Adrenal gland (tissue), 19 donors: ENCODE measurements at regions of chr1 and their contacts with region 1.

Region 1: DNA sequence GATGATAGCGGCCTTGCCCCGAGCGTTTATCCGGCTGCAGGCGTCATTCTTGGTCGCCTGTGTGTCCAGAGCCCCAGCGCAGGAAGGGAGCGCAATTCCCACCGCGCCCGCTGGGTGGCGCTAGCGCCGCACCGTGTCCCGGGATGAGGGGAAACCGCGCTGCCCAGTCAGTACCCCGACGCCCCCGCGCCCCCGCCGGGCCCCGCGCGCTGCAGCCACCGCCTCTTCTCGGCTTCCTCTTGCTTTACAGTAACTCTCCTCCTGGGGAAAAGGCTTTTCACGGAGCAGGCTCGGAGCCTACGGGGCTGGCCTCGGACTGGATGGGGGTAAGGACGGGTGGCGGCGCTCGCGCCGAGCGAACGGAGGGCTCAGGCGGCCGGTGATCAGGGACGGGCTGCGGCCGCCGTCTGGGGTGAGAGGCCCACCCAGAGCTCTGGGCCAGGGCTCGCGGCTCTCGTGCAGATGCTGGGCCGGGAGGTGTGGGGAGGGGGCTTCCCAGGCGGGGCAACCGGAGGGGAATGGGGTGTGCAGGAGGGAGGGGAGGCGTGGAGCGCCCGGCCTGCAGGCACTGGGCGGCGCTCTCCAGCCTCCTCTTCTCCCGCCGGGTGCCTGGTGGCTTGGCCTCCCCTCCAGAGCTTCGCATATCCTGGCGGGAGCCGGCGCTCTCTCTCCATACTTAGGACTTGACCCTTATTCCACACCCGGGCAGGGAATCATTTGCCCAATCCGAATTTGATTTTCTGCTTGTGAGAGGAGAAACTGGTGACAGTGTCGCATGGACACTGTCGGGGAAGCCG is 29.8 kb downstream of the TEX35 start:
- DNase-seq: peak; percentile 83 to 95 (median 89)
- H3K4me3 ChIP-seq: peak overlapping the region; percentile 26 to 94 (median 74)
- H3K27ac ChIP-seq: peak overlapping the region in 4 of 5 donors; percentile 45 to 86 (median 81)
- H3K4me1 ChIP-seq: peaks cover 4 to 6% of the 10 kb centered on the region in 2 donors
- H3K27me3 ChIP-seq: no peaks in the 10 kb centered on the region
- CTCF ChIP-seq: peak; percentile 93 to 99 (median 98)
- POLR2A ChIP-seq: no peak

Region 2: DNA sequence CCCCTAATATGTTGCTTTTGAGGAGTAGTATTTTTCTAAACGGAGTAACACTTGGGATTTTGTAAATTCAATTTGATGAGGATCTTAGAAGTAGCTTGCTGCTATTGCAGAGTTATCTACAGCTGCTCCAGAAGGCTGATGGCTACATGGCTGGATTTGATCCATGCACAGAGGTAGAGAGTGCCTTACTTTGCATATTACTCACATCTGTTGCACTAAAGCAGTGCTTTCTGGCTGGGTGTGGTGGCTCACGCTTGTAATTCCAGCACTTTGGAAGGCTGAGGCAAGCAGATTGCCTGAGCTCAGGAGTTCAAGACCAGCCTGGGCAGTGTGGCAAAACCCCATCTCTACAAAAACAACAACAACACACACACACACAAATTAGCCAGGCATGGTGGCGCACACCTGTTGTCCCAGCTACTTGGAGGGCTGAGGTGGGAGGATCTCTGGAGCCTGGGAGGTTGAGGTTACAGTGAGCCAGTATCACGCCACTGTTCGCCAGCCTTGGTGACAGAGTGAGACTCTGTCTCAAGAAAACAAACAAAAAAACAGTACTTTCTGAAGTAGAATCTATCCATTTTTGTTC is 206.9 kb after region 1 on chr1:
- intact Hi-C with region 1: loop called (anchors 2 to 5 kb)
- DNase-seq: no peak
- H3K4me3 ChIP-seq: no peak overlapping the region
- H3K27ac ChIP-seq: no peak overlapping the region
- H3K4me1 ChIP-seq: peaks cover 3 to 7% of the 10 kb centered on the region in 2 donors
- H3K27me3 ChIP-seq: no peaks in the 10 kb centered on the region
- CTCF ChIP-seq: no peak
- POLR2A ChIP-seq: no peak